Head of caudate nucleus (tissue), 42 donors: ENCODE measurements at regions of chr18 and their contacts with region 1.

Region 1: GRCh38 chr18:8948471-8949149 is 153.9 kb upstream of the NDUFV2 start:
- DNase-seq: peak in 6 of 42 donors; percentile 14 to 55 (median 25)

Region 2: GRCh38 chr18:9000733-9001132 is 52.1 kb after region 1 on chr18:
- intact Hi-C with region 1: loop called (anchors 10 kb)
- DNase-seq: no peak